ENCODE measurements at regions of chr1 and their contacts with region 1.

Region 1: DNA sequence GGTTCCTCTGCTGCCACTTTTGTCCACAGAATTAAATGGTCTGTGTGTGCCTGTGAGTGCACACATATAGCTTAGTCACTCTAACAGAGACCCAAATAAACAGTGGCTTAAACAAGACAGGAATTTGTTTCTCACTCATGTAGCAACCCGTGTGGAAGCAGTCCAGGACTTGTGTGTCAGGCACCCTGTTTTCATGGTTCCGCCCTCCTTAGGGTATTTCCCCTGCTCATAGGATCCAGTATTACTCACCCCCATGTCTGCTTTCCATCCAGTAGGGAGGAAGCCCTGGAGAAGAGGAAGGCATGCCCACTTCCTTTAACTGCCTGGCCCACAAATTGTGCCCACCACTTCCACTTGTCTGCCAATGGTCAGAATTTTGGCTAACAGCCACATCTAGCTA is 41.3 kb upstream of the TACSTD2 start:
- DNase-seq: peak; percentile 70 to 89
- H3K4me3 ChIP-seq: no peak overlapping the region
- H3K27ac ChIP-seq: peak overlapping the region; percentile 76
- H3K4me1 ChIP-seq: peaks cover 46% of the 10 kb centered on the region
- H3K27me3 ChIP-seq: no peaks in the 10 kb centered on the region
- CTCF ChIP-seq: no peak

Region 2: GRCh38 chr1:58432851-58433668 is 185.2 kb before region 1 on chr1:
- CTCF ChIA-PET with region 1: no interaction called
- POLR2A ChIA-PET with region 1: no interaction called
- intact Hi-C with region 1: no loop called
- DNase-seq: peak; percentile 34 to 74
- H3K4me3 ChIP-seq: no peak overlapping the region
- H3K27ac ChIP-seq: no peak overlapping the region
- H3K4me1 ChIP-seq: no peaks in the 10 kb centered on the region
- H3K27me3 ChIP-seq: no peaks in the 10 kb centered on the region
- CTCF ChIP-seq: no peak

Region 3: DNA sequence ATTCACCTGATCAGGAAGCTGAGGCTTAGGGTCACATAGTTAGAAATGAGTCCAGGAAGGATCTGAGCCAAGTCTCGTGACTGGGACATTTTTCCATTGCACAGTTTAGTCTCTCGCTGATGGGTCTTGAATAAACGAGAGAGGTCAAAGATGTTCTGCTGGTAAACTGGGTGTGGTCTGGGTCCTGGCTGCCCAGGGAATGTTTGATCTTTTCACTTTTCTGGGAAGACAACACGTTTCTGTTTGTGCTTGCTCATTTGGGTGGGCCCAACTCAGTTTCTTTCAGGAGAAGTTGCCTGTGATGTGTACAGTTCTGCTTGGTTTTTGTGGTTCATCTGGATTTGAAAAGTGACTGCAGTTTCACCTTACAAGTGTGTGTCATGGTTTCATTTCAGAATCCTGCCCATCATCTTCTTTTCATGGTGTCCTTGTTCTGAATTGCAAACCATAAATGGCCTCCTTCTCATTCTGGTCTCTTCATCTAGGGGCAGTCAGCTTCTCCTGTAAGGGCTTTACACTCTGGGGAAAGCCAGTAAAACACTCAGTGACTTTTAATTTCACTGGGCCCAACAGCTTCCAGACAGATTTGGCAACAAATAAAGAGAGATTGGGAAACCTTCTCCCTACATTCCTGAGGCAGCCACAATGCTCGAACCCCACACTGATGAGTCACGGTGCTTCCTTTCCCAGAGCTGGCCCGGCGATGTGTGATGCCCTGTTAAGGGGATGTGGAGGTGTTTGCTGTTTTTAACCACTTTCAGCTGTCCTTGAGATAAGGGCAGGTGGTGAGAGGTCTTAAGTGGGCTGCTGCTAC is 34.0 kb before region 1 on chr1:
- CTCF ChIA-PET with region 1: no interaction called
- POLR2A ChIA-PET with region 1: interaction called, 4 read pairs
- intact Hi-C with region 1: loop called (anchors 1 kb)
- DNase-seq: peak; percentile 90 to 96
- H3K4me3 ChIP-seq: peak overlapping the region; percentile 36; the same call in 1 of the 2 replicates
- H3K27ac ChIP-seq: peak overlapping the region; percentile 99
- H3K4me1 ChIP-seq: peaks cover 45% of the 10 kb centered on the region
- H3K27me3 ChIP-seq: no peaks in the 10 kb centered on the region
- CTCF ChIP-seq: no peak

Region 4: DNA sequence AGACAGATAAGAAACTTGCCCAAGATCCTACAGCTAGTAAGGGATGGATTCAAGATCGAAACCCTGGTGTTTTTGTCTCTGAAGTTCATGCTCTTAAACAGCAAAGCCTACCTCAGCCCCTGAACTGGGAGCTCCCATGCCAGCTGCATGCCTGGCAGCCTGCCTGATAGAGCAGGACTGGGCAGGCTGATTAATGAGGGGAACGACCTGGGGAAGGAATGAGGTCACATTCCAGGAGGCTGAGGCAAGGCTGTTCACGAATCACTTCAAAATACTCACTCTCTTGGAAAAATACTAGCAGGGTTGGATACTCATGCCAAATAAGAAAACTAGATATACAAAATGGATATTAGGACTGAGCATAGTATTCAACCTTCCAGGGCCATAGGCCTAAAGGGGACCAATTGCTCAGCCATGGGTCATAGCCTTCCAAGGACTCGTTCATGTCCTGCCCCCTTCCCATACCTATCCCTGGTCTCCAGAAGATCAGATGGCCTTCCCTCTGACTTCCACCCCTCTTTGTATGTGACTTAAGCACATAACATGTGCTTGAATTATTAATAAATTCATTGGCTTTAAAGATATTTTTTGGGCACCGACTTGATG is 25.7 kb before region 1 on chr1:
- CTCF ChIA-PET with region 1: interaction called, 3 read pairs
- POLR2A ChIA-PET with region 1: interaction called, 4 read pairs
- intact Hi-C with region 1: loop called (anchors 2 kb)
- DNase-seq: peak; percentile 87 to 94
- H3K4me3 ChIP-seq: no peak overlapping the region
- H3K27ac ChIP-seq: peak overlapping the region; percentile 81
- H3K4me1 ChIP-seq: peaks cover 31% of the 10 kb centered on the region
- H3K27me3 ChIP-seq: no peaks in the 10 kb centered on the region
- CTCF ChIP-seq: no peak

Region 5: GRCh38 chr1:58628987-58629598 is 10.8 kb after region 1 on chr1:
- CTCF ChIA-PET with region 1: no interaction called
- POLR2A ChIA-PET with region 1: interaction called, 10 read pairs
- intact Hi-C with region 1: no loop called
- DNase-seq: peak in 1 of 2 experiments; percentile 89
- H3K4me3 ChIP-seq: no peak overlapping the region
- H3K27ac ChIP-seq: peak overlapping the region; percentile 49
- H3K4me1 ChIP-seq: peaks cover 19% of the 10 kb centered on the region
- H3K27me3 ChIP-seq: no peaks in the 10 kb centered on the region
- CTCF ChIP-seq: no peak

Region 6: DNA sequence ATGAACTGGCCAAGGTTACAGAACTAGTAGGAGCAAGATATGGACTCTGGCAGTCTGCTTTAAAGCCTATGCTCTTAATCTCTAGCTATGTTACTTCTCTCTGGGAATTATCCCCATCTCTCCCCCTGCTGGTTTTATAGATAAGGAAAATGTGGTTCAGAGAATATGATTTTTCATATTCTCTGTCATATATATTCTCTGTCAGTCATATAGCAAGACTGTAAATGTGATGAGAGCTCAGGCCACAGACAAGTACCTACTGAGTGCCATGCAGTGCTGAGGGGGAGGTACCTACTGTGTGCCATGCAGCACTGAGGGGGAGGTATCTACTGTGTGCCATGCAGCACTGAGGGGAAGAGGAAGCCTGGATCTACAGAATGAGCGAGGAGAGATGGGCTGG is 458.3 kb after region 1 on chr1:
- CTCF ChIA-PET with region 1: no interaction called
- POLR2A ChIA-PET with region 1: no interaction called
- intact Hi-C with region 1: no loop called
- DNase-seq: no peak
- H3K4me3 ChIP-seq: no peak overlapping the region
- H3K27ac ChIP-seq: no peak overlapping the region
- H3K4me1 ChIP-seq: no peaks in the 10 kb centered on the region
- H3K27me3 ChIP-seq: no peaks in the 10 kb centered on the region
- CTCF ChIP-seq: peak; percentile 52; the same call in 1 of the 2 replicates

Region 7: DNA sequence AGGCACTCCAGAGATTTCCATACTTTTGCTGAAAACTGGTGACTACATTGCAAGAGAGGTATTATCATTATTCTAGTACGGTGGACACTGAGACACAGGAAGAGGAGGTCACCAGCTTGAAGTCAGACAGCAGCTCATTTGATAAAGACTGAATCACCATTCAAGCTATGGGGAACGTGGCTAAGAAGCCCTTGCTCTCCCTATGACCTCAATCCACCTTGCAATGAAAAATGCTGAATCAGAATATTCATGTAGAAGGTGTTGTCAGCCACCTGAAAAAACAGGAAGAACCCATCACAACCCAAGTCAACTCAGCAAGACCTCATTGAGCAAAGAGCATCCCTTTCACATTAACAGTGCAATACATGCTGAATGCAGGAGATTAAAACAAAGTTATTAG is 619.6 kb after region 1 on chr1:
- CTCF ChIA-PET with region 1: no interaction called
- POLR2A ChIA-PET with region 1: no interaction called
- intact Hi-C with region 1: no loop called
- DNase-seq: no peak
- H3K4me3 ChIP-seq: no peak overlapping the region
- H3K27ac ChIP-seq: no peak overlapping the region
- H3K4me1 ChIP-seq: no peaks in the 10 kb centered on the region
- H3K27me3 ChIP-seq: no peaks in the 10 kb centered on the region
- CTCF ChIP-seq: no peak

Measured in PC-9 (cell line).